Activated CD4-positive, alpha-beta memory T cell treated with anti-CD3 and anti-CD28 coated beads for 36 hours (primary cell): ENCODE measurements at regions of chr11 and their contacts with region 1.

Region 1: DNA sequence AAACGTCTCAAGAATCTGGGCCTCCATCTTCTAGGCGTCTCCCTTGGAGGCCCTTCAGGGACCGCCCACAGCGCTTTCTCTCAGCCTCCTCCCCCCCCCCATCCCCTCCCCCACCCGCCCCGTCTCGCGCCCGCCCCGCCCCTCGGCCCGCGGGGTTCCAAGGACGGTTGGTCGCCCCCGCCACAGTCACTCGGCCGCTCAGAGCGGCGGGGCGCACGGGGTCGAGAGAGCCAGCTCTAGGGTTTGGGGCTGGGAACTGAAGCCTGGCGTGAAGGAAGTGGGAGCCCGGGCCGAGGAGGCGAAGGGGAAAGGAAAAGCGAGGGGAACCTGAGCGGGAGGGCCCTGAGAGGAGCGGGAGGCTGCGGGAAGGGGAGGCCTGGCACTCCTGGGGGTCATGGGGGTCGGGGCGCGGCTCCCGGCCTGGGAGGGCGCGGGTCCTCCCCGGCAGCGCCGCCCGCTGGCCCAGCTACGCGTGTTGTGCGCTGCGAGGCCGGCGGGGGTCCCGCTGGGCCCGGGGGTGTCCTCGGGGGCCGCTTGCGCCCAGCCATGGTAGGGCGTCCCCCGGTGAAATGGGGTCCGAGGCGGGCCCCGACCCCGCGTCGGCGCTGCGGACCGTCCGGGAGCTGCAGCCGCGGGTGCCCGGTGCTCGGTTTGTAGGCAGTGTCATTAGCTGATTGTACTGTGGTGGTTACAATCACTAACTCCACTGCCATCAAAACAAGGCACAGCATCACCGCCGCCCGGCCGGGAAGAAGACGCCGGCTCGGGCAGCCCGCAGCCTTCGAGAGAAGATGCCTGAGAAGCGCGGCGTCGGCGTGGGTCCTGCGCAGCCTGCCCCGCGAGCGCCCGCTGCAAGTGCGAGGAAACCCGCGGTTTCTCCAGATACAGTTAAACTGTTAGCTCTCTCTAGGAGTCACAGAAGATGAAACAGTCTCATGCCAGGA is at the start of gene BTG4:
- DNase-seq: peak; percentile 35
- H3K4me3 Mint-ChIP-seq: peak within 1 kb of the TSS; percentile 57
- H3K27ac Mint-ChIP-seq: no peak within 1 kb of the TSS
- H3K4me1 Mint-ChIP-seq: peaks cover 10% of the 10 kb centered on the region
- H3K27me3 Mint-ChIP-seq: peaks cover 43% of the 10 kb centered on the region
- total RNA-seq, gene BTG4: not detected

Region 2: GRCh38 chr11:111526501-111526900 is 13.9 kb after region 1 on chr11:
- CTCF ChIA-PET with region 1: interaction called, 3 read pairs
- POLR2A ChIA-PET with region 1: no interaction called
- intact Hi-C with region 1: loop called (anchors 2 kb)
- DNase-seq: peak; percentile 43
- H3K4me3 Mint-ChIP-seq: no peak overlapping the region
- H3K27ac Mint-ChIP-seq: no peak overlapping the region
- H3K4me1 Mint-ChIP-seq: peaks cover 28% of the 10 kb centered on the region
- H3K27me3 Mint-ChIP-seq: peaks cover 15% of the 10 kb centered on the region